Activated B cell treated with CpG ODN at 0.5 μM for 24 hours (primary cell): ENCODE measurements at regions of chr6 and their contacts with region 1.

Region 1: GRCh38 chr6:33391278-33391921 is at the start of gene KIFC1:
- DNase-seq: peak; percentile 95
- ATAC-seq: peak; percentile 88
- H3K4me3 Mint-ChIP-seq: peak within 1 kb of the TSS; percentile 79
- H3K27ac Mint-ChIP-seq: peak within 1 kb of the TSS; percentile 95
- H3K4me1 Mint-ChIP-seq: peaks cover 25% of the 10 kb centered on the region
- H3K27me3 Mint-ChIP-seq: no peaks in the 10 kb centered on the region
- CTCF ChIP-seq: peak; percentile 77
- total RNA-seq, gene KIFC1: 1.9 and 2.2 TPM in 2 replicates

Region 2: DNA sequence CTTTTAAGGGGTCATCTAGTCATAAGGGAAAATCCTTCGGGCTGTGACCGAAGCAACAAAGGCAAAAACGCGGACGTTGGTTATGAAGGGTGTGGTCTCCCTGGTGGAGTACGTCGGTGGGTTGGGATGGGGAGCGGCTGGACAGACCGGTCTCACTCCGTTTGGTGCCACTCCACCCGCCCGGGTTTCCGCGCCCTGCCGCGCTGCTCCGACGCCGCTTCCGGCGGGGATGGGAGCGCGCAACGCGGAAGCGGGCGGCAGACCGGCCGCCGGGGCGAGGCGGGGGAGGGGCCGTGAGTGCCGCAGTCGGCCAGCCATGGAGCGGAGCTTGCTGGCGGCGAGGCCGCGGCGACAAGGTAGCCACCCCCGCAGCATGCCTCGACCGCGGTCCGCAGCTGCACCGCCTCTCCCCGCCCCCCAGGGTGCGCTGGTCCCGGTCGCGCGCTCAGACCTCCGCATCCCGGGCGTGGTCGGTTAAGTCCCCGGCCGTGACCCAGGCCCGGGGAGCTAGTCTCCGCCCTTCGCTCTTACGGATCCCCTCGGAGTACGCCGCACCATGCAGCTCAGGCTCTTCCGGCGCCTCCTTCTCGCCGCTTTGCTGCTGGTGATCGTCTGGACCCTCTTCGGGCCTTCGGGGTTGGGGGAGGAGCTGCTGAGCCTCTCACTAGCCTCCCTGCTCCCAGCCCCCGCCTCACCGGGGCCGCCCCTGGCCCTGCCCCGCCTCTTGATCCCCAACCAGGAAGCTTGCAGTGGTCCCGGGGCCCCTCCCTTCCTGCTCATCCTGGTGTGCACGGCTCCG is 114.3 kb before region 1 on chr6 and contains the start of gene B3GALT4:
- CTCF ChIA-PET with region 1: interaction called, 4 read pairs
- POLR2A ChIA-PET with region 1: interaction called, 6 read pairs
- intact Hi-C with region 1: loop called (anchors 1 kb)
- DNase-seq: peak; percentile 77
- ATAC-seq: peak; percentile 68
- H3K4me3 Mint-ChIP-seq: peak within 1 kb of the TSS; percentile 92
- H3K27ac Mint-ChIP-seq: peak within 1 kb of the TSS; percentile 100
- H3K4me1 Mint-ChIP-seq: peaks cover 62% of the 10 kb centered on the region
- H3K27me3 Mint-ChIP-seq: no peaks in the 10 kb centered on the region
- CTCF ChIP-seq: no peak
- total RNA-seq, gene B3GALT4: 19.1 and 19.4 TPM in 2 replicates

Region 3: GRCh38 chr6:33344701-33345697 is 46.4 kb before region 1 on chr6:
- CTCF ChIA-PET with region 1: interaction called, 4 read pairs
- POLR2A ChIA-PET with region 1: interaction called, 4 read pairs
- intact Hi-C with region 1: loop called (anchors 1 kb)
- DNase-seq: peak; percentile 31
- ATAC-seq: peak; percentile 35
- H3K4me3 Mint-ChIP-seq: peak overlapping the region; percentile 80
- H3K27ac Mint-ChIP-seq: peak overlapping the region; percentile 92
- H3K4me1 Mint-ChIP-seq: peaks cover 35% of the 10 kb centered on the region
- H3K27me3 Mint-ChIP-seq: no peaks in the 10 kb centered on the region
- CTCF ChIP-seq: no peak

Region 4: GRCh38 chr6:33425668-33426577 is 34.5 kb after region 1 on chr6:
- CTCF ChIA-PET with region 1: interaction called, 13 read pairs
- POLR2A ChIA-PET with region 1: interaction called, 13 read pairs
- intact Hi-C with region 1: loop called (anchors 1 kb)
- DNase-seq: peak; percentile 68
- ATAC-seq: peak; percentile 60
- H3K4me3 Mint-ChIP-seq: peak overlapping the region; percentile 87
- H3K27ac Mint-ChIP-seq: peak overlapping the region; percentile 89
- H3K4me1 Mint-ChIP-seq: peaks cover 66% of the 10 kb centered on the region
- H3K27me3 Mint-ChIP-seq: no peaks in the 10 kb centered on the region
- CTCF ChIP-seq: no peak

Region 5: GRCh38 chr6:33490209-33490608 is 98.8 kb after region 1 on chr6:
- CTCF ChIA-PET with region 1: no interaction called
- POLR2A ChIA-PET with region 1: no interaction called
- intact Hi-C with region 1: loop called (anchors 2 kb)
- DNase-seq: no peak
- ATAC-seq: no peak
- H3K4me3 Mint-ChIP-seq: no peak overlapping the region
- H3K27ac Mint-ChIP-seq: no peak overlapping the region
- H3K4me1 Mint-ChIP-seq: peaks cover 4% of the 10 kb centered on the region
- H3K27me3 Mint-ChIP-seq: peaks cover 3% of the 10 kb centered on the region
- CTCF ChIP-seq: no peak

Region 6: GRCh38 chr6:33700391-33701050 is 309.1 kb after region 1 on chr6:
- CTCF ChIA-PET with region 1: no interaction called
- POLR2A ChIA-PET with region 1: interaction called, 4 read pairs
- intact Hi-C with region 1: loop called (anchors 1 kb)
- DNase-seq: peak; percentile 58
- ATAC-seq: peak; percentile 56
- H3K4me3 Mint-ChIP-seq: peak overlapping the region; percentile 28
- H3K27ac Mint-ChIP-seq: peak overlapping the region; percentile 79
- H3K4me1 Mint-ChIP-seq: peaks cover 69% of the 10 kb centered on the region
- H3K27me3 Mint-ChIP-seq: no peaks in the 10 kb centered on the region
- CTCF ChIP-seq: no peak